ENCODE measurements at regions of chr3 and their contacts with region 1.

Region 1: DNA sequence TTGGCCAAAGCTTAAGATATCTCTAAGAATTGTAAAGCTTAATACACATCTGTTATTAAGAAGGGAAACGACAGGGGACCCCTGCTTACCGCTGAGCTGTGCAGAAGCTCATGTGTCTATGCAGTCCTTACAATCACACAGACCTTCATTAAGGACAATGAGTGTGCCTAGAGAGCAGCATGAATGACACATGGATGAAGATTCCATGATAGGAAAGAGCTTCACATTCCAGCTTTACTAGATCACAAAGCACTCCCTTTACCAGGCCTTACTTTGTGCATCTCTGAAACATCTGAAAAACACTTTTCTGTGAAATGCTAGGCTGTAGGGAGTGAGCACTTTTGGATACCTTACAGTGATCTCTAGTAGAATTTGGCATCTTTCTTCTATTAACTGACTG is 32.0 kb downstream of the RNF168 start:
- DNase-seq: no peak
- ATAC-seq: no peak
- H3K4me3 ChIP-seq: no peak overlapping the region
- H3K4me3 Mint-ChIP-seq: no peak overlapping the region
- H3K27ac ChIP-seq: no peak overlapping the region
- H3K27ac Mint-ChIP-seq: no peak overlapping the region
- H3K4me1 ChIP-seq: no peaks in the 10 kb centered on the region
- H3K4me1 Mint-ChIP-seq: peaks cover 0 to 15% (median 0%) of the 10 kb centered on the region in 7 donors
- H3K27me3 ChIP-seq: no peaks in the 10 kb centered on the region
- H3K27me3 Mint-ChIP-seq: no peaks in the 10 kb centered on the region

Region 2: GRCh38 chr3:196360586-196360985 is 111.0 kb before region 1 on chr3:
- CTCF ChIA-PET with region 1: no interaction called
- POLR2A ChIA-PET with region 1: no interaction called
- intact Hi-C with region 1: loop called in 1 of 2 experiments (anchors 10 kb)
- DNase-seq: no peak
- ATAC-seq: no peak
- H3K4me3 ChIP-seq: no peak overlapping the region
- H3K4me3 Mint-ChIP-seq: no peak overlapping the region
- H3K27ac ChIP-seq: no peak overlapping the region
- H3K27ac Mint-ChIP-seq: peak overlapping the region in 1 of 9 donors; percentile 43
- H3K4me1 ChIP-seq: no peaks in the 10 kb centered on the region
- H3K4me1 Mint-ChIP-seq: peaks cover 0 to 12% (median 5%) of the 10 kb centered on the region in 7 donors
- H3K27me3 ChIP-seq: no peaks in the 10 kb centered on the region
- H3K27me3 Mint-ChIP-seq: no peaks in the 10 kb centered on the region